ENCODE measurements at regions of chr7 and their contacts with region 1.

Region 1: GRCh38 chr7:101882595-101883564 is 65.5 kb downstream of the CUX1 start:
- DNase-seq: peak; percentile 96 to 100
- ATAC-seq: peak; percentile 92 to 94
- H3K4me3 ChIP-seq: 0 out of 3 replicates have a peak overlapping the region, but pooled peaks have one; percentile 4
- H3K27ac ChIP-seq: peak overlapping the region; percentile 96
- H3K4me1 ChIP-seq: peaks cover 89% of the 10 kb centered on the region
- CTCF ChIP-seq: peak; percentile 19; the same call in 2 of the 3 replicates
- EP300 ChIP-seq: peak; percentile 99 to 100
- POLR2A ChIP-seq: no peak
- RAD21 ChIP-seq: peak in 1 of 2 experiments; percentile 40; a peak in 4 of 5 replicates

Region 2: DNA sequence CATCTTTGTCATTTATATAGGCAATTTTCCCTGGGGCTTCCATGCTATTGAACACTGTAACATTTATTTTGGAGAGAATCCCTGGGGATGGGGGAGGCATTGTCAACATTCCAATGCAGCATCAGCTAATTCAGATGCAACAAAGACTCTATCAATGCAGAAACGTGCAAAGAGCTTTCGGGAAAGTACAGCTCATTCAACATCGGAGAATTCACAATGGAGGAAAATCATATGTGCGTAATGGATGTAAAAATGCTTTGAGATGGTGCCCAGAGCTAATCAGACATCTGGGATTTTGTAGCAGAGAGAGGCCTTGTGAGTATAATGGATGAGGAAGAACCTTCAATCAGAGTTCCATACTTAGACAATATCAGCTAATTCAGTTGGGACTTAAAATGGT is 609.7 kb before region 1 on chr7:
- CTCF ChIA-PET with region 1: no interaction called
- POLR2A ChIA-PET with region 1: no interaction called
- DNase-seq: no peak
- ATAC-seq: no peak
- H3K4me3 ChIP-seq: no peak overlapping the region
- H3K27ac ChIP-seq: no peak overlapping the region
- H3K4me1 ChIP-seq: no peaks in the 10 kb centered on the region
- CTCF ChIP-seq: no peak
- EP300 ChIP-seq: no peak
- POLR2A ChIP-seq: no peak
- RAD21 ChIP-seq: no peak

Region 3: GRCh38 chr7:101767544-101767943 is 115.3 kb before region 1 on chr7:
- CTCF ChIA-PET with region 1: no interaction called
- POLR2A ChIA-PET with region 1: no interaction called
- DNase-seq: no peak
- ATAC-seq: peak in 1 of 2 experiments; percentile 38; a peak in 3 of 6 replicates
- H3K4me3 ChIP-seq: no peak overlapping the region
- H3K27ac ChIP-seq: no peak overlapping the region
- H3K4me1 ChIP-seq: no peaks in the 10 kb centered on the region
- CTCF ChIP-seq: no peak
- EP300 ChIP-seq: no peak
- POLR2A ChIP-seq: no peak
- RAD21 ChIP-seq: no peak

Region 4: GRCh38 chr7:101870351-101871062 is 12.4 kb before region 1 on chr7:
- CTCF ChIA-PET with region 1: interaction called, 10 read pairs
- POLR2A ChIA-PET with region 1: interaction called, 20 read pairs
- DNase-seq: peak; percentile 32 to 78
- ATAC-seq: peak; percentile 81 to 82
- H3K4me3 ChIP-seq: no peak overlapping the region
- H3K27ac ChIP-seq: peak overlapping the region; percentile 58 to 69
- H3K4me1 ChIP-seq: peaks cover 63% of the 10 kb centered on the region
- CTCF ChIP-seq: peak; percentile 17; the same call in 1 of the 3 replicates
- EP300 ChIP-seq: no peak
- POLR2A ChIP-seq: no peak
- RAD21 ChIP-seq: peak in 1 of 2 experiments; percentile 25; a peak in 1 of 5 replicates

Region 5: DNA sequence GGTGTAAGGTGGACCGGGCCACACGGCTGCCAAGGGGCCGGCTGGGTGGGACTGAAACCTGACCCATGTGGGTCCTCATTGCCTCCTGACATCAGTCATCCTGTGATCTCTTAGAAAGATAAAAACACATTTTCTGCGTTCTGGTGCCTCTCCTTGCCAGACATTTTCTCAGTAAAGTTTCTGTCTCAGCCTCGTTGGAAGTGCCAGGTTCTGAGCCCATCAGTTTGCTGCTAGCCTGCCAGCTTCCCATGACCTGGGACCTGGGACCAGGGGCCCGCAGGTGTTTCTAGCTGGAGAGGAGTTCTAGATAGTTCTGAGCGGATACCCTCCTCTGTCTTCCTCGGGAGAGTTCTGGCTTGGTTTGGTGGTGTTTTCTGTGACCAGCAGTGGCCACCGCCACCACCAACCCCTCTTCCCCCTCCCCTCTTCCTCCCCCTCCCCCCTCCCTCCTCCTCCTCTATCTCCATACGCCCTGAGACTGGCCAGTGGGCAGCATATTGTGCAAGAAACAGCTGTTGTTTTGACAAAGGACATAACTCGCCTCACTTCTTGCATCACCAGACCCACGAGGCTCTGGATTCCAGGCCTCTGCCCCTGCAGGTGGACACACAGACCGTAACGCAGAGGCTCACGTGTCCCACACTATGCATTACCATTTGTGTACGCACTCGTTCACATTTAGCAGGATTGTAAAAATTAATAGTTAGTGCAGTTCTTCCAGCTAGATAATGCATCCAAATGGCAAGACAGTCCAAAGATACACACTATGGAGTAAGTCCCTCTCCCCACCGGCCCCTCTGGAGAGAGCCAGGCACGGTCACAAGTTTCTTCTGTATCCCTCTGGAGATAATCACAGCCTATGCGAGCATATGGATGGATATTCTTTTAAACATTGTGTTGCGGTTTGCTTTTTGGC is 29.2 kb after region 1 on chr7:
- CTCF ChIA-PET with region 1: no interaction called
- POLR2A ChIA-PET with region 1: no interaction called
- DNase-seq: no peak
- ATAC-seq: peak in 1 of 2 experiments; percentile 45; a peak in 2 of 6 replicates
- H3K4me3 ChIP-seq: no peak overlapping the region
- H3K27ac ChIP-seq: peak overlapping the region in 1 of 2 experiments; percentile 64; a peak in 4 of 6 replicates
- H3K4me1 ChIP-seq: peaks cover 16% of the 10 kb centered on the region; the same call in 2 of the 3 replicates
- CTCF ChIP-seq: no peak
- EP300 ChIP-seq: no peak
- POLR2A ChIP-seq: no peak
- RAD21 ChIP-seq: no peak

Region 6: GRCh38 chr7:102205915-102206314 is 323.0 kb after region 1 on chr7:
- CTCF ChIA-PET with region 1: no interaction called
- POLR2A ChIA-PET with region 1: no interaction called
- DNase-seq: no peak
- ATAC-seq: no peak
- H3K4me3 ChIP-seq: no peak overlapping the region
- H3K27ac ChIP-seq: no peak overlapping the region
- H3K4me1 ChIP-seq: no peaks in the 10 kb centered on the region
- CTCF ChIP-seq: no peak
- EP300 ChIP-seq: no peak
- POLR2A ChIP-seq: no peak
- RAD21 ChIP-seq: no peak